ENCODE measurements at regions of chr10 and their contacts with region 1.

Region 1: GRCh38 chr10:93702211-93703001 is at the start of gene FRA10AC1:
- DNase-seq: peak; percentile 92
- ATAC-seq: peak; percentile 97
- H3K4me3 ChIP-seq: peak within 1 kb of the TSS; percentile 91
- H3K27ac ChIP-seq: peak within 1 kb of the TSS; percentile 91
- H3K4me1 ChIP-seq: no peaks in the 10 kb centered on the region
- H3K27me3 ChIP-seq: peaks cover 2% of the 10 kb centered on the region; the same call in 1 of the 2 replicates
- CTCF ChIP-seq: peak; percentile 45
- POLR2A ChIP-seq: no peak
- RAD21 ChIP-seq: peak; percentile 46
- total RNA-seq, gene FRA10AC1: 1.6 and 10.6 TPM in 2 replicates

Region 2: DNA sequence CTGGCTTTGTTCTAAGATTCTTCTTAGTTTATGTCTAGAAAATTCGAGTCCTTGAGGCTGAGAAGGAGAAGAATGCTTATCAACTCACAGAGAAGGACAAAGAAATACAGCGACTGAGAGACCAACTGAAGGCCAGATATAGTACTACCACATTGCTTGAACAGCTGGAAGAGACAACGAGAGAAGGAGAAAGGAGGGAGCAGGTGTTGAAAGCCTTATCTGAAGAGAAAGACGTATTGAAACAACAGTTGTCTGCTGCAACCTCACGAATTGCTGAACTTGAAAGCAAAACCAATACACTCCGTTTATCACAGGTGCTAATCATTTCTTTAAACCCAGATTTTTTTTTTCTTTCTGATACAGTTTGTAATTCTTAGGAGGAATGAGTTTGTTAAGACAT is 199.3 kb before region 1 on chr10:
- CTCF ChIA-PET with region 1: no interaction called
- POLR2A ChIA-PET with region 1: interaction called, 10 read pairs
- dilution Hi-C with region 1: no loop called
- in situ Hi-C with region 1: no loop called
- intact Hi-C with region 1: no loop called
- DNase-seq: no peak
- ATAC-seq: no peak; the same call in 1 of the 2 replicates
- H3K4me3 ChIP-seq: no peak overlapping the region
- H3K27ac ChIP-seq: no peak overlapping the region; the same call in 1 of the 2 replicates
- H3K4me1 ChIP-seq: peaks cover 3% of the 10 kb centered on the region; the same call in 1 of the 2 replicates
- H3K27me3 ChIP-seq: no peaks in the 10 kb centered on the region
- CTCF ChIP-seq: no peak
- POLR2A ChIP-seq: no peak
- RAD21 ChIP-seq: no peak

Region 3: DNA sequence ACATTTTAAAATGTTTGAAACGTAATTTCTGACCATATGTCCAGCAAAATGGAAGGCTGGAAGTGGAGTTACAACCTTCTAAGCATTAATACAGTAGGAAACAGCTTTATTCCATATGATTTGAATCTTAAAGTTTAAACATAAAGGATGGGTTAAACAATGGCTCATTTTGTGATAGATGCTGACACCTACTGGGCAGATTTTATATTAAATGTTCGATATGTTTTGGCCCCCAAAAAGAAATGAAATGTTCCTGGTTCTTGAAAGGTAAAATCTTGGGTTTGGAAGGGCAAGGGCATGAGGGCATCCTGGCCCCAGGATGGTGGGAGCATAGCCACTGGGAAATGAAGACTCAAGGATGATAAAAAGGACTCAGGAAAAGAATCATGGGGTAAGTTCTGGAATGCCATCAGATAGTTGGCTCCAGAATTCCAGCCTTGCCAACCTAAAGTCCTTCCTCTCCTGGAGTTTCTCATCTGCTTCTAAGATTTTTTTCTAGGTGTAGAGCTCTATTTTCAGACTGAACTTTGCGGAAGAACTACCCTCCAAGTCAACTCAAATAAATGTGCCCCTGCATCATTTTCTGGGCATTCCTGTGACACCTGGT is 156.7 kb after region 1 on chr10:
- CTCF ChIA-PET with region 1: no interaction called
- POLR2A ChIA-PET with region 1: no interaction called
- dilution Hi-C with region 1: no loop called
- in situ Hi-C with region 1: no loop called
- intact Hi-C with region 1: no loop called
- DNase-seq: peak; percentile 10
- ATAC-seq: no peak
- H3K4me3 ChIP-seq: no peak overlapping the region
- H3K27ac ChIP-seq: no peak overlapping the region
- H3K4me1 ChIP-seq: no peaks in the 10 kb centered on the region
- H3K27me3 ChIP-seq: peaks cover 10% of the 10 kb centered on the region
- CTCF ChIP-seq: peak; percentile 50
- POLR2A ChIP-seq: no peak
- RAD21 ChIP-seq: peak; percentile 58